Naive thymus-derived CD4-positive, alpha-beta T cell (primary cell): ENCODE measurements at regions of chr11 and their contacts with region 1.

Region 1: GRCh38 chr11:36492724-36493304 is 17.3 kb downstream of the TRAF6 start:
- DNase-seq: peak in 7 of 9 donors; percentile 11 to 48 (median 36)
- ATAC-seq: peak; percentile 81
- H3K4me3 ChIP-seq: no peak overlapping the region
- H3K4me3 Mint-ChIP-seq: no peak overlapping the region
- H3K27ac ChIP-seq: no peak overlapping the region
- H3K27ac Mint-ChIP-seq: peak overlapping the region in 4 of 9 donors; percentile 7 to 53 (median 44)
- H3K4me1 ChIP-seq: peaks cover 0 to 8% of the 10 kb centered on the region in 2 donors
- H3K4me1 Mint-ChIP-seq: peaks cover 17 to 42% (median 28%) of the 10 kb centered on the region in 7 donors
- H3K27me3 ChIP-seq: no peaks in the 10 kb centered on the region
- H3K27me3 Mint-ChIP-seq: no peaks in the 10 kb centered on the region

Region 2: GRCh38 chr11:35822815-35823495 is 669.9 kb before region 1 on chr11:
- CTCF ChIA-PET with region 1: no interaction called
- POLR2A ChIA-PET with region 1: no interaction called
- intact Hi-C with region 1: loop called in 1 of 2 experiments (anchors 1 kb)
- DNase-seq: no peak
- ATAC-seq: no peak
- H3K4me3 ChIP-seq: no peak overlapping the region
- H3K4me3 Mint-ChIP-seq: no peak overlapping the region
- H3K27ac ChIP-seq: no peak overlapping the region
- H3K27ac Mint-ChIP-seq: peak overlapping the region in 1 of 9 donors; percentile 46
- H3K4me1 ChIP-seq: peaks cover 0 to 6% of the 10 kb centered on the region in 2 donors
- H3K4me1 Mint-ChIP-seq: peaks cover 4 to 23% (median 17%) of the 10 kb centered on the region in 7 donors
- H3K27me3 ChIP-seq: no peaks in the 10 kb centered on the region
- H3K27me3 Mint-ChIP-seq: no peaks in the 10 kb centered on the region

Region 3: GRCh38 chr11:36205536-36205935 is 287.3 kb before region 1 on chr11:
- CTCF ChIA-PET with region 1: no interaction called
- POLR2A ChIA-PET with region 1: no interaction called
- intact Hi-C with region 1: no loop called
- DNase-seq: no peak
- ATAC-seq: no peak
- H3K4me3 ChIP-seq: no peak overlapping the region
- H3K4me3 Mint-ChIP-seq: no peak overlapping the region
- H3K27ac ChIP-seq: no peak overlapping the region
- H3K27ac Mint-ChIP-seq: no peak overlapping the region
- H3K4me1 ChIP-seq: no peaks in the 10 kb centered on the region
- H3K4me1 Mint-ChIP-seq: no peaks in the 10 kb centered on the region
- H3K27me3 ChIP-seq: no peaks in the 10 kb centered on the region
- H3K27me3 Mint-ChIP-seq: peaks cover 2 to 35% (median 14%) of the 10 kb centered on the region in 5 donors

Region 4: DNA sequence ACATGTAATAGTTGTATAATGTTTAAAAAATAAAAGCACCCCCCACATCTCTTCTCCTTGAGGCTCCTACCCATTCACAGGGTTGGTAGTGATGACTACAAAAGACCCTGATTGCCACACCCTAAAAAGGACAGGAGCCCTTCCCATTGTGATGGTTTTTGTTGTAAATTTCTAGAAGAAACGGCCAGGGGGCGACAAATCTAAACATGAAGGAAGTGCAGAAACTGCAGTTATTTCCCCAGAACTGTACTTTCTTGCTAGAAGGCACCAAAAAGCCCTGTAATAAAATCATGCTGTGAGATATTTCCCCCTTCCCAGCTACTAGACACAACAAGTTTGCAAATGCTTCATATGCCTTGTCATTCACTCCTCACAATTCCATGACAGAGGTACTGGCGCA is 185.9 kb before region 1 on chr11:
- CTCF ChIA-PET with region 1: no interaction called
- POLR2A ChIA-PET with region 1: no interaction called
- intact Hi-C with region 1: loop called in 1 of 2 experiments (anchors 1 kb)
- DNase-seq: no peak
- ATAC-seq: peak; percentile 26
- H3K4me3 ChIP-seq: no peak overlapping the region
- H3K4me3 Mint-ChIP-seq: no peak overlapping the region
- H3K27ac ChIP-seq: no peak overlapping the region
- H3K27ac Mint-ChIP-seq: no peak overlapping the region
- H3K4me1 ChIP-seq: peaks cover 0 to 5% of the 10 kb centered on the region in 2 donors
- H3K4me1 Mint-ChIP-seq: peaks cover 0 to 8% (median 0%) of the 10 kb centered on the region in 7 donors
- H3K27me3 ChIP-seq: no peaks in the 10 kb centered on the region
- H3K27me3 Mint-ChIP-seq: peaks cover 13 to 38% (median 20%) of the 10 kb centered on the region in 5 donors

Region 5: DNA sequence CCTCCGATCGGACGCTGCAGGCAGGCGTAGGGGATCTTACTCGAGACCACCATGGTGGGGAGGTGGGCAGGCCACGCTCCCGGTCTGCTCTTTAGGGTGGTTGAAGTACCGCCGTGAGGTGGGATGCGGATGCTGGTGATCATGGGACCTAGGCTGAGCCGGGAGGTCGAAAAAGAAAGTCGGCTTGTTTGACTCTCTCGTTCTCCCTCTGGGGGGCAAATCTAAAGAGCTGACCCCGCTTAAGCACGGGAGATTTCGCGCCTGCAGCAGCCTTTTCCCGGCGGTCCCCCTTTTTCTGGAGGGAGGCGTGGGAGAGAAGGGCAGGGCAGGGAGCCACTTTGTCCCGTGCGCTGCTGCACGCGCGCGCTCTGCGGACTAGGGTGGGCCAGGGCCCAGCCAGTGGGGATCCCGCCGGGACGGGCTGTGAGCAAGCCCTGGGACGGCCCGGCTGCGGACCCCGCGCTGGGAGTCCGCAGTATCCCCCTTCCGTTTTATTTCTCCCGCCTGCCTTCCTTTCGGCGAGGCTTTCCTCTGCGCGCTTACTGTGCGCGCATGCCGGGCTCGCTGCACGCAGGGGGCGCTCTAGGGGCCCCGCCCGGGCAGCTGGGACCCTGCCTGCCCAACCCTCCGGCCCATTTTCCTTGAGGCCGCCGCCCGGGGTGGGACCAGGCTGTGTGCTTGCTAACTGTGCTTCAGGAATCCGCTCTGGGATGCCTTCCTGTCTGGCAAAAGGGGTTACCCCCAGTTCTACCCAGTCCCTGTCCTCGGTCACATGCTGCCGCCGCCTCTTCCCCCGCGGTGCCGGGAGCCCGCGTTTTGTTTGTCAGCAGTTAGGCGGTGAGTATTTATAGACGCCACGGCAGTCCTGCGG is 115.7 kb before region 1 on chr11:
- CTCF ChIA-PET with region 1: no interaction called
- POLR2A ChIA-PET with region 1: no interaction called
- intact Hi-C with region 1: loop called in 1 of 2 experiments (anchors 1 kb)
- DNase-seq: peak in 3 of 9 donors; percentile 12 to 76 (median 26)
- ATAC-seq: peak; percentile 81
- H3K4me3 ChIP-seq: peak overlapping the region; percentile 71
- H3K4me3 Mint-ChIP-seq: peak overlapping the region; percentile 52 to 98 (median 74)
- H3K27ac ChIP-seq: no peak overlapping the region
- H3K27ac Mint-ChIP-seq: peak overlapping the region in 2 of 9 donors; percentile 41 to 85
- H3K4me1 ChIP-seq: peaks cover 0 to 19% of the 10 kb centered on the region in 2 donors
- H3K4me1 Mint-ChIP-seq: peaks cover 6 to 49% (median 22%) of the 10 kb centered on the region in 7 donors
- H3K27me3 ChIP-seq: peaks cover 0 to 5% of the 10 kb centered on the region in 2 donors
- H3K27me3 Mint-ChIP-seq: peaks cover 37 to 67% (median 65%) of the 10 kb centered on the region in 5 donors